ENCODE measurements at regions of chr14 and their contacts with region 1.

Region 1: DNA sequence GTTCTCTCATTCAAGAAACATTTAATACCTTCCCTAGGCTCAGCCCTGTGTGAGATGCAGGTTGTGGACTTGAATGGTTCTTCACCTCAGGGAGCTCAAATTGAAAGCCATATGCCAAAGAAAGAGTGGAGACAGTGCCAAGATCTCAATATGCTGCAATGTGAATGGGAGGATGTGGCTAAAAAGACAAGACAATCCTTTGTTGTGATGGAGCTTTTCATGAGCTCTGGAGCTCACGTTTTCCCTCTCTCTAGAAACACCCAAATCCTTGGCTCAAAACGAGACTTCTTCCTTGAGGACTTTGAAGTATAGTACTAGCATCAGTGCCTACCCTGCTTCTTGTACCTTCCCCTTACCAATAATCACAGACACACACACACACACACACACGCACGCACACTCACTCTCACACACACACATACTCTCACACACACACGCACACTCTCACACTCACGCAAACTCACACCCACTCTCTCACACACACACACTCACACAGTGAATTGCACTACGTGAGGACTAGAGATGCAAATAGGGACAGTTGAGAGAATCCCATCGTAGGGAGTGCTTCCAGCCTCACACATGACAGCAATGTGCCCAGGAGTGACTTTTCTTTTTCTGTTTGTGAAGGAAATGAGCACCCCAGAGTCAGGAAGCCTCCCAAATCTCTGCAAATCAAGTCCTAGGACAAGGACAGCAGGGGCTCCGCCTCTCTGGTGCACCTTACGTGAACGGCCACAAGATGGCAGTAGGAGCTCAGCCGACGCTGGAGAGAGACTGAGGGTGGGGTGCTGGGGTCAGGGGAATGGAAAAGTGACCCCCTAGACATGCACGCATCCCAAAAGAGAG is 231.4 kb downstream of the PCNX1 start:
- DNase-seq: peak; percentile 61
- H3K4me3 ChIP-seq: peak overlapping the region in 1 of 4 donors; percentile 22
- H3K27ac ChIP-seq: no peak overlapping the region
- H3K4me1 ChIP-seq: peaks cover 0 to 6% (median 0%) of the 10 kb centered on the region in 4 donors
- H3K27me3 ChIP-seq: no peaks in the 10 kb centered on the region
- CTCF ChIP-seq: peak; percentile 88 to 92 (median 91)
- EP300 ChIP-seq: no peak
- POLR2A ChIP-seq: no peak

Region 2: GRCh38 chr14:71320107-71320733 is 181.5 kb after region 1 on chr14:
- in situ Hi-C with region 1: loop called in 1 of 4 experiments (anchors 25 kb)
- intact Hi-C with region 1: no loop called
- DNase-seq: peak; percentile 98
- H3K4me3 ChIP-seq: peak within 1 kb of the TSS; percentile 75 to 98 (median 82)
- H3K27ac ChIP-seq: peak within 1 kb of the TSS; percentile 95 to 98 (median 98)
- H3K4me1 ChIP-seq: peaks cover 5 to 39% (median 22%) of the 10 kb centered on the region in 4 donors
- H3K27me3 ChIP-seq: no peaks in the 10 kb centered on the region
- CTCF ChIP-seq: peak in 1 of 5 experiments; percentile 19
- EP300 ChIP-seq: no peak
- POLR2A ChIP-seq: peak; percentile 95

Region 3: GRCh38 chr14:71403656-71404055 is 265.0 kb after region 1 on chr14:
- in situ Hi-C with region 1: loop called in 1 of 4 experiments (anchors 25 kb)
- intact Hi-C with region 1: no loop called
- DNase-seq: peak; percentile 14
- H3K4me3 ChIP-seq: no peak overlapping the region
- H3K27ac ChIP-seq: no peak overlapping the region
- H3K4me1 ChIP-seq: peaks cover 0 to 19% (median 0%) of the 10 kb centered on the region in 4 donors
- H3K27me3 ChIP-seq: no peaks in the 10 kb centered on the region
- CTCF ChIP-seq: peak in 4 of 5 experiments; percentile 12 to 23 (median 19)
- EP300 ChIP-seq: no peak
- POLR2A ChIP-seq: no peak

Region 4: DNA sequence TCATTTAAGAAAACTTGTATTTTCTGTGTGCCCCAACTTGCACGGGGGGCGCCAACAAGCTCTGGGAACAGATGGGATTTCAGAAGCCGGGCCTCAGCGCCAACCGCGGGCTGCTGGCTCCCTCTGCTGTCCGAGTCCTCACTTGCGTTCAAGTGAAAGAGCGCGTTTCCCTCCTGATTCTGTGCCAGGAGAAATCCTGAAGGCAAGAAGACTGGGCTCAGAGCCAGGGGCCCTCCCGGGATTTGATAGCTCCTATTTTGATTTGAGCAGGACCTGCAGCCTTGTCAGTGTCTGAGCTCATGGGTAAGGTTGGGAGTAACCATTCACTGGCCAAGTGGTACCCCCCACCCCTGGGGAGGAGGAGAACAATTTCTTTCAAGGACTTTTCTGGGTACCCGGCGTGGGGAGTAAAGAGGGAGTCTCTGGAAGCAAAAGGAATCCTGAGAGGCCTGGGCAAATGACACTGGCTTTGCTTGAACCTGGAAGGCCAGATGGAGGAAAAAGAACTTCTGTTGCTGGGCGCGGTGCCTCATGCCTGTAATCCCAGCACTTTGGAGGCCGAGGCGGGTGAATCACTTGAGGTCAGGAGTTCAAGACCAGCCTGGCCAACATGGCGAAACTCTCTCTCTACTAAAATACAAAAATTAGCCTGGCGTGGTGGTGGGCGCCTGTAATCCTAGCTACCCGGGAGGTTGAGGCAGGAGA is 614.6 kb after region 1 on chr14:
- in situ Hi-C with region 1: loop called (anchors 5 to 25 kb)
- intact Hi-C with region 1: loop called (anchors 5 kb)
- DNase-seq: peak; percentile 88
- H3K4me3 ChIP-seq: peak overlapping the region in 1 of 4 donors; percentile 9
- H3K27ac ChIP-seq: no peak overlapping the region
- H3K4me1 ChIP-seq: peaks cover 0 to 10% (median 6%) of the 10 kb centered on the region in 4 donors
- H3K27me3 ChIP-seq: no peaks in the 10 kb centered on the region
- CTCF ChIP-seq: peak; percentile 78 to 90 (median 86)
- EP300 ChIP-seq: no peak
- POLR2A ChIP-seq: no peak